ENCODE measurements at regions of chr19 and their contacts with region 1.

Region 1: GRCh38 chr19:20051841-20052768 is 12.8 kb upstream of the ZNF682 start:
- DNase-seq: peak; percentile 92
- ATAC-seq: peak; percentile 99
- H3K4me3 ChIP-seq: peak overlapping the region; percentile 61 to 78 (median 70)
- H3K27ac ChIP-seq: peak overlapping the region; percentile 47
- H3K4me1 ChIP-seq: no peaks in the 10 kb centered on the region
- H3K27me3 ChIP-seq: no peaks in the 10 kb centered on the region
- CTCF ChIP-seq: no peak
- EP300 ChIP-seq: no peak
- POLR2A ChIP-seq: peak; percentile 50 to 55
- RAD21 ChIP-seq: no peak

Region 2: DNA sequence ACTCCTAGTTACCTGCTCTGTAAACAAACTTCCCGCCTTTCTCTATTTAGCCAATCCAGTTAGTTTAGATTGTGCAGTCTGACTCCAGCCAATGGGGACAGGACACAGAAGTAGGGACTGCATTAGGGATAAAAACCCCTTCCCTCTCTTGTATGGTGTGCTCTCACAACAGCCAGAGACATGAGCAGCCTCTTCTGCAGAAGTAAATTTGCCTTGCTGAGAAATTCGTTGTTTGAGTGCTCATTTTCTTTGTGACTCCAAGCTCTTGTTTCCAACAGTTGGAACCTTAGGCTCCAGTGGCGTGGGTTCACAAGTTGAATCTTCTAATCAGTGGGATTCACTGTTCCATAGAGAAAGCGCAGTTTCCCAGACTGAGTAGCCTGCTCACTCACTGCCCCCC is 85.2 kb before region 1 on chr19:
- CTCF ChIA-PET with region 1: no interaction called
- POLR2A ChIA-PET with region 1: no interaction called
- in situ Hi-C with region 1: no loop called
- intact Hi-C with region 1: no loop called
- DNase-seq: no peak
- ATAC-seq: no peak
- H3K4me3 ChIP-seq: no peak overlapping the region
- H3K27ac ChIP-seq: no peak overlapping the region
- H3K4me1 ChIP-seq: no peaks in the 10 kb centered on the region
- H3K27me3 ChIP-seq: no peaks in the 10 kb centered on the region
- CTCF ChIP-seq: no peak
- EP300 ChIP-seq: no peak
- POLR2A ChIP-seq: no peak
- RAD21 ChIP-seq: no peak

Region 3: DNA sequence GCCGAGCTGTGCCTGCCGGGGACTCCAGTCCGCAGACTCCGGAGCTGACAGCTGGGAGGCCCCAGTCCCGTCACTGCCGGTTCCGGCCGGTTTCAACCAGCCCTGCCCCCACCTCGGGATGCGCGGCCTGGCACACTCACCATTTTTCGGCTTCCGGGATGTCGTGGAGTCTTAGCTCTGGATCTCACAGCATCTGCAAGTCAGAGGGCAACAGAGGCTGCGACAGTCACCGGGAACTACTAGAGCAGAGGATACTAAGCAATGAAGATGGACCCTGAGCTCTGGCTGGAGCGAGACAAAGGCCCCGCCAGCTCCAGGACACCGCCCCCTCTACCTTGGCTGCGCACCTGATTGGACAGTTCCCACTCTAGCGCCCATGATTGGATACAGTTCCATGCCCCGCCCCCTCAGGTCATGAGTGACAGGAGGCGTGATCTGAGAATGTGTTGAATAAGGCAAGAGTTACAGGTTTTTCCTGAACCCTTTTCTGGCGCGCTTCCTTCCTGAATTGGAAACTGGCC is 12.8 kb before region 1 on chr19 and contains the start of gene ZNF682:
- CTCF ChIA-PET with region 1: no interaction called
- POLR2A ChIA-PET with region 1: interaction called, 29 read pairs
- in situ Hi-C with region 1: no loop called
- intact Hi-C with region 1: loop called (anchors 2 kb)
- DNase-seq: peak; percentile 84
- ATAC-seq: peak; percentile 99
- H3K4me3 ChIP-seq: peak within 1 kb of the TSS; percentile 67 to 75 (median 69)
- H3K27ac ChIP-seq: peak within 1 kb of the TSS; percentile 79
- H3K4me1 ChIP-seq: peaks cover 16% of the 10 kb centered on the region; the same call in 1 of the 2 replicates
- H3K27me3 ChIP-seq: no peaks in the 10 kb centered on the region
- CTCF ChIP-seq: no peak
- EP300 ChIP-seq: no peak
- POLR2A ChIP-seq: peak; percentile 62 to 73; a peak in 3 of 4 replicates
- RAD21 ChIP-seq: no peak
- total RNA-seq, gene ZNF682: 7.2 and 9.1 TPM in 2 replicates

Region 4: DNA sequence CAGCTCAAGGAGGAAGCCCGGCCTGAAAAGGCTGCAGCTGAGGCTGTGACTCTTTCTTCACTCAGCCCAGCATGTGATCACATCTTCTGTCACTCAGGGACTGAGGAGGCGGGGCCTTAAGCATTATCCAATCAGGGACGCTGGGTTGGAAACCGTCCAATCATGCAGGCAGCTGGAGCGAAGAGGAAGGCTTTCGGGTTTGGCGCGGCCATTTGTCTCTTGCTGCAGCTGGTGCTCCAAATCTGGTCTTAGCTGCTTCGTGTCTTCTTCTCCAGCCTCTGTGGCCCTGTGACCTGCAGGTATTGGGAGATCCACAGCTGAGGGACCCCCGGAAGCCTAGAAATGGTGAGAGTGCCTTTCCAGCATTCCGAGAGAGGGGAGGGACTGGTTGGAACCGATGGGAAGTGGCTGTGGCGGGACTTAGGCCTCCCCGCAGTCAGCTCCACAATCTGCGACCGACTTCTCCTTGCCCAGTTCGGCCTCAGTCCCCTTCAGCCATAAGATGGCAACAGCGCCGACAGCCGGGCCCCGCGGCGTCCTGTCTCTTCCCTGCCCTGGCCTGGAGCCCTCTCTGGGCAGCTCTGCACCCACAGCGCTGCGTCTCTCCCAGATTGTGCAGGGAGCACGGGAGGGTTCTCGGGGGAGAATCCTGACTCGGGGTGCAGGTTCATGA is 25.8 kb after region 1 on chr19 and contains the start of gene ZNF90:
- CTCF ChIA-PET with region 1: no interaction called
- POLR2A ChIA-PET with region 1: interaction called, 17 read pairs
- in situ Hi-C with region 1: no loop called
- intact Hi-C with region 1: no loop called
- DNase-seq: peak; percentile 88
- ATAC-seq: peak; percentile 94
- H3K4me3 ChIP-seq: peak within 1 kb of the TSS; percentile 63 to 69 (median 69)
- H3K27ac ChIP-seq: peak within 1 kb of the TSS; percentile 67
- H3K4me1 ChIP-seq: peaks cover 8% of the 10 kb centered on the region
- H3K27me3 ChIP-seq: no peaks in the 10 kb centered on the region
- CTCF ChIP-seq: 0 out of 2 replicates have a peak, but pooled peaks have one; percentile 26
- EP300 ChIP-seq: no peak
- POLR2A ChIP-seq: peak; percentile 38; a peak in 1 of 4 replicates
- RAD21 ChIP-seq: no peak
- total RNA-seq, gene ZNF90: 3.8 and 4.0 TPM in 2 replicates

Region 5: GRCh38 chr19:20103091-20103740 is 51.1 kb after region 1 on chr19:
- CTCF ChIA-PET with region 1: no interaction called
- POLR2A ChIA-PET with region 1: no interaction called
- in situ Hi-C with region 1: no loop called
- intact Hi-C with region 1: no loop called
- DNase-seq: no peak
- ATAC-seq: no peak
- H3K4me3 ChIP-seq: no peak overlapping the region
- H3K27ac ChIP-seq: no peak overlapping the region
- H3K4me1 ChIP-seq: no peaks in the 10 kb centered on the region
- H3K27me3 ChIP-seq: no peaks in the 10 kb centered on the region
- CTCF ChIP-seq: no peak
- EP300 ChIP-seq: no peak
- POLR2A ChIP-seq: no peak
- RAD21 ChIP-seq: no peak

Region 6: GRCh38 chr19:20124879-20125278 is 72.8 kb after region 1 on chr19:
- CTCF ChIA-PET with region 1: no interaction called
- POLR2A ChIA-PET with region 1: no interaction called
- in situ Hi-C with region 1: no loop called
- intact Hi-C with region 1: no loop called
- DNase-seq: no peak
- ATAC-seq: no peak
- H3K4me3 ChIP-seq: no peak overlapping the region
- H3K27ac ChIP-seq: no peak overlapping the region
- H3K4me1 ChIP-seq: no peaks in the 10 kb centered on the region
- H3K27me3 ChIP-seq: no peaks in the 10 kb centered on the region
- CTCF ChIP-seq: no peak
- EP300 ChIP-seq: no peak
- POLR2A ChIP-seq: no peak
- RAD21 ChIP-seq: no peak

Measured in HepG2 (cell line).